ENCODE measurements at regions of chr20 and their contacts with region 1.

Region 1: DNA sequence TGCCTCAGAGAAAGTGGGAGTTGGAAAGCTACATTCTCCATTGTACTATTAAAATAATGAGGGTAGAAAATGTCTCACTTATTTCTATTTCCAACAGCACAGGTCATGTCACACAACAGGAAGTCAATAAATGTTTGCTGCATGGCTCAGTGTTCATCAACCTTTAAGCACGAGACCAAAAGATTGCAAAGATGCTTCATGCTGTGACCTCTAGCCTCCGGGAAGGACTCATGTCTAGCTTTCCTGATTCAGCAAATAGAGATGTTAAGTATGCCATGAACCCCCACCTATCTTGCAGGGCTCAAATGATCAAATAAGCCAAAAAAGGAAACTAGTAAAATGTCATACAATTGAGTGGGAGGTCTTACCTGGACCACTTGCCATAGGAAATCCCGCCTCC is 57.4 kb downstream of the NCOA6 start:
- DNase-seq: peak; percentile 33
- H3K4me3 ChIP-seq: no peak overlapping the region
- H3K27ac ChIP-seq: no peak overlapping the region
- H3K27me3 ChIP-seq: no peaks in the 10 kb centered on the region
- CTCF ChIP-seq: no peak

Region 2: GRCh38 chr20:34538671-34539123 is 229.4 kb before region 1 on chr20:
- CTCF ChIA-PET with region 1: interaction called, 14 read pairs
- POLR2A ChIA-PET with region 1: no interaction called
- DNase-seq: no peak
- H3K4me3 ChIP-seq: no peak overlapping the region
- H3K27ac ChIP-seq: no peak overlapping the region
- H3K27me3 ChIP-seq: no peaks in the 10 kb centered on the region
- CTCF ChIP-seq: peak; percentile 87

Region 3: DNA sequence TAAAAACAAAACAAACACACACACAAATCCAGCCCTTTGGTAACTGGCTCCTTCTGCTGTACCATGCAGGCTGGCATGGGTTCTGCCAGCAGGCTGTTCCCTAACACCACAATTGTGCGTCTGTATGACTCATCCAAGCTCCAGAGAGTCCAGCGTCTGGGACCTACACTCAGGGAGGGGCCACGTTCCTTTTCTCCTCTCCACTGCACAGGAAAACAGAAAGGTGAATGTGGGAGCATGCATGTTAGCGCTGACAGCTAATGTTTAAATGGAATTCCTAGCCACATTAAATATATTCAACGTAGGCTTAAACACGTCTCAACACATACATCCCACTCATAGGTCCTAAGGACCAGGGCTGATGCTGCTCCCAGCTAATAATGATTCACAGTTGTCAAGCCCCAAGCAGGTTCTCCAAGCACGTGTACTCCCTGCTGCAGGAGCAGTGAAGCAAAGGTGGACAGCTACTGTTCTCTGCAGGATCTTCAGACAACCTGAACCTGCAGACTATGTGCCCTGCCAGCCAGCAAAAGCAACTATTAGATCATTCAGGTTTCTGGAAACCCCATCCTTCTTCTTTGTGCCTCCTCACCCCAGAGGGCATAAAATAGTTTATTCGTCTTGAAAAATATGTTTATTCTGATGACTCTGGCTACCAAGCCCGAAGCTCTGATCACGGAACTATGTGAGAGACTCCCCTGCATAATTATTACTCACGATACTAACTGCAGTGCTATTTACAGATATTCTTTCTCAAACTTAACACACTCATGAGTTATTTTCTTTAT is 188.7 kb before region 1 on chr20:
- CTCF ChIA-PET with region 1: interaction called, 60 read pairs
- POLR2A ChIA-PET with region 1: no interaction called
- DNase-seq: no peak
- H3K4me3 ChIP-seq: no peak overlapping the region
- H3K27ac ChIP-seq: no peak overlapping the region
- H3K27me3 ChIP-seq: no peaks in the 10 kb centered on the region
- CTCF ChIP-seq: peak; percentile 69

Region 4: DNA sequence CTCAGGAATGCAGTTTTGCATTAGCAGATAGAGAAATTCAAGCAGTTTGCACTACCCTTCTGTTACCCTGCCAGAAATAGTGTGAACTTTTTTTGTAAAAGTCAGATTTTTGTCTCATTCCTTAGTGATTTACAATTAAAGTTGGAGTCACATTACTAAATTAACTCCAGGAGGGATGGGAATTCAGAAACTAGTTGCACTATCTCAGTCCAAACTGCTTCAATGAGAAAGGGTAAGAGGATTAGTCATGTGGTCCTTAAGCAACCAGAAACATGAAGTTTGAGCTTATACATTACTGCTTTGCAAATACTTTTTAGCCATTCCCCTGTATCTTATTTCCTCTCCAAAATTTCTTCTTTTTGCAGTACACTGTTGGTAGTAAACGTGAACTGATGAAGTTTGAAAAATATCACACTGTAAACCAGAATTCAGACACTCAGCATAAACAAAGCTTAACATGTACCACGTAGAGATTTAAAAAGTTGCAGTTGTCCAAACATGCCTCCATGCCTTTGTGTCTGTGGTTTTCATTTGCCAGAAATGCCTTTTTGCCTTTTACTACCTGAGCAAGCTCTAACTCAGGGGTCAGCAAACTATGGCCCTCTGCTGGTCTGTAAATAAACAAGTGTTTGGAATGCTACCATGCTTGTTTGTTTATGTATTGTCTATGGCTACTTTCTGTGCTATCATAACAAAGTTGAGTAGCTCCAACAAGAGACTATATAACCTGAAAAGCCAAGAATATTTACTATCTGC is 14.2 kb before region 1 on chr20:
- CTCF ChIA-PET with region 1: interaction called, 36 read pairs
- POLR2A ChIA-PET with region 1: interaction called, 3 read pairs
- DNase-seq: peak; percentile 13
- H3K4me3 ChIP-seq: no peak overlapping the region
- H3K27ac ChIP-seq: no peak overlapping the region
- H3K27me3 ChIP-seq: no peaks in the 10 kb centered on the region
- CTCF ChIP-seq: no peak

Region 5: GRCh38 chr20:34791289-34792020 is 23.4 kb after region 1 on chr20:
- CTCF ChIA-PET with region 1: interaction called, 13 read pairs
- POLR2A ChIA-PET with region 1: no interaction called
- DNase-seq: peak; percentile 10
- H3K4me3 ChIP-seq: no peak overlapping the region
- H3K27ac ChIP-seq: peak overlapping the region; percentile 81
- H3K27me3 ChIP-seq: no peaks in the 10 kb centered on the region
- CTCF ChIP-seq: no peak

Measured in AG04450 (cell line).